RWPE1 (cell line): ENCODE measurements at regions of chr1 and their contacts with region 1.

Region 1: DNA sequence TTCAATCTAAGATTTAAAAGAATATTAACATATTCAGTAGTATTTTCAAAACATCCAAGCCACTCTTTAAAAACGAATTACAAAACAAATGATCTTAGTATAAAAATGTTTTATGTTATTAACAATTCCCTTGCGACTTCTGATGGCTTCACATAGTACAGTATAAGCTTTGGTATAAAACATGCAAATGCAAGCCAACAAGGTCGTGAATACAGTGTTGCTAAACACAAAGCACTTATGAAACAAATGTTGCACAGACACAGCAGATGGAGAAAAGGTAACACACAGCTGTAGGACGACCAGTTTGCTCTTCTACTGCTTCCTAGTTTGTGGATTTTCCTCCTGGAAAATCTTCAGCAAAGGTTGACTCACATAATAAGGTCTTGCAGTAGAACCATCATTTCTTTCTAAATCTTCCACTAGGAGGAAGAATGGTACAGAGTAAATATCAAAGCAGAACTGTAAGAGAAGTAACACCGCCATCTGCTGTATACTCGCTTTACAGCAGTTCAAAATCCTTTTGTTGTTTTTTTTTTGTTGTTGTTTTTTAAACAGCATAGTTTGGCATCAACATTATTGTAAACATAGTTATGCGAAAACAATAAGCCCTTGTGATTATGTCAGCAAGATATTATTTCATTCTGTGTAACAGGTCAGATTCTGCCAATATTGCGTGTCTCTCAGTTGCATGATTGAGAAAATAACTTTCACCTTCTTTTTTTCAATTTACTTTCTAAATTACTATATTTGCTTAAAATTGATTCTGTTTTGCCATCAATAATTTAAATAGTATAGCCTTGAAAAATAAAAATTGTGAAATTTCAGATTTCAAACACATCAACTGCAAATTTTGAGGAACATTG is 69.5 kb downstream of the LHX8 start:
- DNase-seq: peak; percentile 57
- H3K27ac ChIP-seq: no peak overlapping the region
- CTCF ChIP-seq: peak; percentile 83

Region 2: DNA sequence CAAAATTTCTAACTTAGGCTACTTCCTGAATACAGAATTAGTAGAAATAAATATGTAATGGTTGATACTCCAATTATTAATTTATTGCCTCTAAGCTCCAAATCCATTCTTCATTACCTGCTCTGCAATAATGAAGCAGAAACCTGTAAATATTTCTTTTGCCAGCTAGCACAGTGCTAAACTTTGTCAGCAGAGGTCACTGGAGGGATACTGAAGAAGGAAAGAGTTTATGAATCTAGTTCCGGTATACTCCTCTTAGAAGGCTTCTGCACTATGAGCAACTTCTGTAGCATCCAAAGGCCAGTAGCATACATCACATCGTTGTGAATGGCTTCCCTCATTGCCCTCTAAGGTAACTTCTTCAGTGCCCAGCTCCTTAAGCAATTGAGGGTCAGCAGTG is 150.4 kb before region 1 on chr1:
- CTCF ChIA-PET with region 1: interaction called, 21 read pairs
- POLR2A ChIA-PET with region 1: no interaction called
- DNase-seq: no peak
- H3K27ac ChIP-seq: no peak overlapping the region
- CTCF ChIP-seq: 0 out of 2 replicates have a peak, but pooled peaks have one; percentile 13